ENCODE measurements at regions of chrX and their contacts with region 1.

Region 1: DNA sequence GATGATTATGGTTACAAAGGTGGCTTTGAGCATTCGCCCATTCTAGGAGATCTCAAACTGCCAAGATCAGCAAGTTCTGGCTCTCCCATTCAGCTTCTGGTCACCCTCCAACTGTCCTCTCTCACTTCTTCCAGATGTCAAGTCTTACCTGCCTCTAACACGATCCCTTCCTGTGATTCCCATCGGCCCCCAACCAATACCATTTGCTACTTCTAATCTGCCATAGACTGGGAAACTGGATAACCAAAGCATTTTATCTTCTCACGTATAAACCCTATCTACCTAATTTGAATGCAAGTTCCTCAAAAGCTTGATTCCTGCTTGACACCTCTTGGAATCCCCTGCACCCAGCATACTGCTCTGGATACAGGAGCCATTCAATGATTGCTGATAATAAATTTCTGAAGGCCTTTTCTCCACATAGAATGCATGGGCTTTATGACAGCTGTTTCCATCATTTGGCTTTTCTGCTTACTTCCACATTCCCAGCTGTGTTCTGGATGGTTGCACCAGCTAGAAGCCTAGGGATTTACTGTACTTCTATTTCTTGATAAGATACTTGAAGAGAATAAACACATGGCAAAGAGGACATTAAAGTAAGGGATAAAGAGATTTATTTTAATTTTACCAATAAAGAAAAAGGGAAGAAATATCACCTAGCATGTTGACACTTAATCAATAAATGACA is 9.6 kb downstream of the GPC4 start:
- DNase-seq: no peak
- ATAC-seq: peak in 2 of 4 donors; percentile 40 to 41
- H3K4me3 ChIP-seq: no peak overlapping the region
- H3K27ac ChIP-seq: no peak overlapping the region
- H3K4me1 ChIP-seq: peaks cover 5% of the 10 kb centered on the region
- H3K27me3 ChIP-seq: no peaks in the 10 kb centered on the region
- CTCF ChIP-seq: no peak

Region 2: DNA sequence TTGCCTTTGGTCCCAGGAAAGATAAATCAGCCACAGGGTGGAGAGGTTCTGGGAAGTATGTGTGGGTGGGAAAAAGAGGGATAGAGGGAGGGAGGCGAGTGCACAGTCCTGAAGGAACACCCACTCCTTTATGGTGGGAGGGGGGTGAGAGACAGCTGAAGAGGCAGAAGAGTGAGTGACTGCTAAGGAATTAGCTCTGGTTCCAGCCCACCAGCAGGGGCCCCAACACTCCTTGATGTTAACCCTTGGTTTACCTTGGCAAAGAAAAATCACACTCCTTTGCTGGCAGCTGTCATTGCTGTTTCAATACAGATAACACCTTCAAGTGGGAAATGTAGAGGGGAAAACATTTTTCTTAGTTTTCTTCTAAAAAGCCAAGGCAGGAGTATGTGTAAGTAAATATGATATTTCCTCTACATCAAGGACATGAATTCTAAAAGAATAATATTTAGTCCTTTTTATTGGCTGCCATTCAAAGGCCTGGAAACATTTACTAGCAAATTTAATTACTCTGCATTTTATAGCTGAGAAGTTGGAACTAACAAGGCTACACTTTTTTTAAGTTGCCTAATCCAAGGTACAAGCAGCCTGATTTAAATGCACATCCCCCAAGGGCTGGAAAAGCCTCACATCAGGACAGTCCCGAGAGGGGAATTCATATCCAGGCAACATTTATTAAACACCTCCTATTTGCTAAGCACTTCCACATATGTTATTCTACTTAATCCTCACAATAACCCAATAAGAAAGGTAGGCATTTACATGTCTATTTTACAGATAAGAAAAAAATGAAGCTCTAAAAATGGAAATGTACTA is 528.9 kb before region 1 on chrX:
- intact Hi-C with region 1: no loop called
- DNase-seq: no peak
- ATAC-seq: no peak
- H3K4me3 ChIP-seq: no peak overlapping the region
- H3K27ac ChIP-seq: no peak overlapping the region
- H3K4me1 ChIP-seq: no peaks in the 10 kb centered on the region
- H3K27me3 ChIP-seq: peaks cover 0 to 4% (median 0%) of the 10 kb centered on the region in 3 donors
- CTCF ChIP-seq: no peak

Region 3: GRCh38 chrX:133215747-133216146 is 189.9 kb before region 1 on chrX:
- intact Hi-C with region 1: no loop called
- DNase-seq: no peak
- ATAC-seq: no peak
- H3K4me3 ChIP-seq: no peak overlapping the region
- H3K27ac ChIP-seq: no peak overlapping the region
- H3K4me1 ChIP-seq: no peaks in the 10 kb centered on the region
- H3K27me3 ChIP-seq: peaks cover 0 to 9% (median 0%) of the 10 kb centered on the region in 3 donors
- CTCF ChIP-seq: peak; percentile 19

Region 4: DNA sequence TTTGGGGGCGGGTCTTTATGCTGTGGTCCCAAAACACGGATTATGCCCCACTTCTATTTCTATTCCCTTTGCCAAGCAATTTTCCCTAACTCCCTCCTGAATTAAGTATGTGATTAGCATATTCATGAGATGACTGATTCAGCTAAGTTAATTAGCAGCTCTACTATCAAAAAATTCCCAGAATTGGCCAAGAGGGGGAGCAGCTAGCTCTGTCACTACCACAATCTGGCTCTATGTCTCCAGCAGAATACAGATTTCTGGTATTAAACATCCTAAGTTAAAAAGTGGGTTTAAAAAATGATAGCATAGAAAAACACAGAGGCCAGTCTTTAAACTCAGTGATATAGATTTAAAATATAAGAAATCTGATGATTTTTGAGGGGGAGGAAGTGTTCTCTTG is 70.6 kb before region 1 on chrX:
- intact Hi-C with region 1: loop called in 1 of 2 experiments (anchors 5 kb)
- DNase-seq: no peak
- ATAC-seq: peak in 1 of 4 donors; percentile 63
- H3K4me3 ChIP-seq: no peak overlapping the region
- H3K27ac ChIP-seq: no peak overlapping the region
- H3K4me1 ChIP-seq: no peaks in the 10 kb centered on the region
- H3K27me3 ChIP-seq: no peaks in the 10 kb centered on the region
- CTCF ChIP-seq: peak; percentile 46